T-cell (primary cell): ENCODE measurements at regions of chr1 and their contacts with region 1.

Region 1: DNA sequence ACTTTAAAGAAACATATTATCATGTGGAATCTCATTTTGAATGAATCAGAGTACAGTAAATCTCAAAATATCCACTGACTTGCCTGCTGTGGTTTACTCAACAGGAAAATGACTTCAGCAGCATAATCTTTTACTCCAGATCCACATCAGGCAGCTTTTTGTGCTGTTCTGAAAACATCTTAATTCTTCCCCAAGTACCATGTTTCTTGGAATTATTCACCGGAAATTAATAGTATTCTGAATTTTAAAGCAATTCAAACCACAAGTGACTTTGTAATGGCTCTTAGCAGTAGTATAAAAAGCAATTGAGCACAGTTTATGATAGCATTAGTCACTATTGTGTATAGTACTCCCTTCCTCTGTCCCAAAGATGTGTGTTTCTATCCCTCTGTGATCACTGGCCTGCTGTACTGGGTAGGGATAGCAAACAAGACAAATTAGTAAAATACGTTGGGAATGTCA is 64.2 kb upstream of the ERRFI1 start:
- DNase-seq: no peak
- ATAC-seq: no peak
- H3K4me3 ChIP-seq: no peak overlapping the region
- H3K4me3 Mint-ChIP-seq: no peak overlapping the region
- H3K27ac ChIP-seq: no peak overlapping the region
- H3K27ac Mint-ChIP-seq: no peak overlapping the region
- H3K4me1 ChIP-seq: no peaks in the 10 kb centered on the region
- H3K4me1 Mint-ChIP-seq: peaks cover 0 to 6% (median 0%) of the 10 kb centered on the region in 3 donors
- H3K27me3 ChIP-seq: peaks cover 2 to 11% of the 10 kb centered on the region in 2 experiments
- H3K27me3 Mint-ChIP-seq: peaks cover 11 to 24% of the 10 kb centered on the region in 2 donors

Region 2: DNA sequence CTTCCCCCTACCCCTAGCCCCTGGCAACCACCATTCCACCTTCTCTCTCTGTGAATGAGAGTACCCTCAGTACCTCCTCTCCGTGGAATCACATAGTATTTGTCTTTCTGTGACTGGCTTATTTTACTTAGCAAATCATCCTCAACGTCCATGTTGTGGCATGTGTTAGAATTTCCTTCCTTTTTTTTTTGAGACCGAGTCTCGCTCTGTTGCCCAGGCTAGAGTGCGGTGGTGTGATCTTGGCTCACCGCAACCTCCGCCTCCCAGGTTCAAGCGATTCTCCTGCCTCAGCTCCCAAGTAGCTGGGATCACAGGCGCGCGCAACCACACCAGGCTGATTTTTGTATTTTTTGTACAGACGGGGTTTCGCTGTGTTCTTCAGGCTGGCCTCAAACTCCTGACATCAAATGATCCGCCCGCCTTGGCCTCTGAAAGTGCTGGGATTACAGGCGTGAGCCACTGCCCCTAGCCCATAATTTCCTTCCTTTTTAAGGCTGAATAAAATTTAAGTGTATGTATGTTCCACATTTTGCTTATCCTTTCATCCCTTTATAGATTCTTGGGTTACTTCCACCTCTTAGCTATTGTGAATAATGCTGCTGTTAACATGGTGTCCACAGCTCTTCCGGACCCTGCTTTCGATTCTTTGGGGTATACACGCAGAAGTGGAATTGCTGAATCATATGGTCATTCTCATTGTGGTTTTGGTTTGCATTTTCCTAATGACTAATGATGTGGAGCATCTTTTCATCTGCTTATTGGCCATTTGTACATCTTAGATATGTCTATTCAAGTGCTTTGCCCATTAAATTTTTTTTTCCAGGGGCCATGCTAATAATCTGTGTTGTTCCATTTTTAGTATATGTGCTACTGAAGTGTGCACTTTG is 96.4 kb before region 1 on chr1:
- CTCF ChIA-PET with region 1: no interaction called
- POLR2A ChIA-PET with region 1: no interaction called
- DNase-seq: no peak
- ATAC-seq: no peak
- H3K4me3 ChIP-seq: no peak overlapping the region
- H3K4me3 Mint-ChIP-seq: no peak overlapping the region
- H3K27ac ChIP-seq: no peak overlapping the region
- H3K27ac Mint-ChIP-seq: no peak overlapping the region
- H3K4me1 ChIP-seq: no peaks in the 10 kb centered on the region
- H3K4me1 Mint-ChIP-seq: no peaks in the 10 kb centered on the region
- H3K27me3 ChIP-seq: no peaks in the 10 kb centered on the region
- H3K27me3 Mint-ChIP-seq: no peaks in the 10 kb centered on the region

Region 3: GRCh38 chr1:8055973-8056372 is 34.3 kb before region 1 on chr1:
- CTCF ChIA-PET with region 1: no interaction called
- POLR2A ChIA-PET with region 1: interaction called in 1 of 2 experiments, 20 read pairs
- DNase-seq: no peak
- ATAC-seq: no peak
- H3K4me3 ChIP-seq: no peak overlapping the region
- H3K4me3 Mint-ChIP-seq: no peak overlapping the region
- H3K27ac ChIP-seq: no peak overlapping the region
- H3K27ac Mint-ChIP-seq: no peak overlapping the region
- H3K4me1 ChIP-seq: no peaks in the 10 kb centered on the region
- H3K4me1 Mint-ChIP-seq: no peaks in the 10 kb centered on the region
- H3K27me3 ChIP-seq: peaks cover 2 to 9% of the 10 kb centered on the region in 2 experiments
- H3K27me3 Mint-ChIP-seq: peaks cover 0 to 2% of the 10 kb centered on the region in 2 donors

Region 4: DNA sequence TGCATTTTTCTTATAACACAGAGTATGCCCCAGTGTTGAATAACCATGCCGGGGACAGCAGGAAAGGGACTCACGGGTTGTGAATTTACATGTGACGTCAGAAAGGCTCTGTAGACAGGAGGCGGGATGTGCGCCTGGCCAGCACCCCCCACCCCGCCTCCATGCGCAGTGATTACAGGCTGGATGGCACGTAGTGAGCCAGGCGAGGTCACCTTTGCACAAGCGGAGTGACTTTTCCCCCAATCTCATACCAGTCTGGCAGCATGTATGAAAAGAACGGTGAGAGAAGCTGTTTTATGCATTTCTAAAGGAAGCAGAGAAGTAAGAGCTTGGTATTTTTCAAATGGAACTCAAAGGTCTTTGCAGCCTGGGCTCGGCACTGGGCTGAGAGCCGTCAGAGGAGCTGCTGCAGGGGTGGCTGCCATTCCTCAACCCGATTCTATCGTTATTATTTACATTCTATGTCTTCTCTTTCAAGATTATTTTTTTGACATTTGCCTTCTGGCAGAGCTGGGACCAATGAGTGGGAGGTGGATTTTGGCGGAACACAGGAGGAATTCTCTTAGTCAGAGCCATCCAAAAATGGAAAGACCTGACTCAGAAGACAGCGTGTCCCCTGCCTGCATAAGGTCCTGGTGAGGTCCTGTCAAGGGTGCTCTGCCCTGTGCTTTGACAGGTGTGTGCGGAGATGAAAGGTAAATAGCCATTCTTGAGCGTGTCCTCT is 112.1 kb after region 1 on chr1:
- CTCF ChIA-PET with region 1: no interaction called
- POLR2A ChIA-PET with region 1: no interaction called
- DNase-seq: no peak
- ATAC-seq: no peak
- H3K4me3 ChIP-seq: no peak overlapping the region
- H3K4me3 Mint-ChIP-seq: no peak overlapping the region
- H3K27ac ChIP-seq: no peak overlapping the region
- H3K27ac Mint-ChIP-seq: no peak overlapping the region
- H3K4me1 ChIP-seq: no peaks in the 10 kb centered on the region
- H3K4me1 Mint-ChIP-seq: peaks cover 6 to 14% (median 9%) of the 10 kb centered on the region in 3 donors
- H3K27me3 ChIP-seq: peaks cover 0 to 5% of the 10 kb centered on the region in 2 experiments
- H3K27me3 Mint-ChIP-seq: peaks cover 0 to 3% of the 10 kb centered on the region in 2 donors

Region 5: DNA sequence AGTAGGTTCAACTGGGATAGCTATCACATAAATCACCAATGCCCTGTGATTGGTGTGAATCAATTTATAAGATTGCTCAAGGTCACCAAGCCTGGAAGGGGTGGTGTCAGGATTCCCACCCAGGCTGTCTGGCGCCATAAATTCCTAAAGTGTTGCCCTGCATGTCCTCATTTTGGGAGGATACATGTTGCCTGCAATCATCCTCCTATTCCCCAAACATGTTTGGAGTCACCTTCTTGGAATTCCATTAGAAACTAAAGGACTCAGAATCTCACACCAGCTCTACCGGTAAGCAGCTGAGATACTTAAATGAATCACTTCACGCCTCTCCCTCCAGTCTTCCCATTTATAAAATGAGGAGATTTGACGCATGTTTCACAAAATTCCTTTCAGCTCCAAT is 173.5 kb after region 1 on chr1:
- CTCF ChIA-PET with region 1: no interaction called
- POLR2A ChIA-PET with region 1: interaction called in 1 of 2 experiments, 16 read pairs
- DNase-seq: no peak
- ATAC-seq: no peak
- H3K4me3 ChIP-seq: no peak overlapping the region
- H3K4me3 Mint-ChIP-seq: no peak overlapping the region
- H3K27ac ChIP-seq: no peak overlapping the region
- H3K27ac Mint-ChIP-seq: no peak overlapping the region
- H3K4me1 ChIP-seq: no peaks in the 10 kb centered on the region
- H3K4me1 Mint-ChIP-seq: no peaks in the 10 kb centered on the region
- H3K27me3 ChIP-seq: peaks cover 2% of the 10 kb centered on the region in 2 experiments
- H3K27me3 Mint-ChIP-seq: peaks cover 1 to 13% of the 10 kb centered on the region in 2 donors